Heart right ventricle (tissue), 16 donors: ENCODE measurements at regions of chr3 and their contacts with region 1.

Region 1: GRCh38 chr3:72245183-72245811 is 460.3 kb upstream of the PROK2 start:
- DNase-seq: peak; percentile 58 to 77
- ATAC-seq: peak; percentile 64 to 89 (median 82)
- H3K4me3 ChIP-seq: no peak overlapping the region
- H3K27ac ChIP-seq: peak overlapping the region in 2 of 10 donors; percentile 14 to 30
- H3K4me1 ChIP-seq: peaks cover 5 to 46% (median 30%) of the 10 kb centered on the region in 9 donors
- H3K27me3 ChIP-seq: no peaks in the 10 kb centered on the region
- CTCF ChIP-seq: peak in 3 of 9 donors; percentile 8 to 23 (median 16)

Region 2: DNA sequence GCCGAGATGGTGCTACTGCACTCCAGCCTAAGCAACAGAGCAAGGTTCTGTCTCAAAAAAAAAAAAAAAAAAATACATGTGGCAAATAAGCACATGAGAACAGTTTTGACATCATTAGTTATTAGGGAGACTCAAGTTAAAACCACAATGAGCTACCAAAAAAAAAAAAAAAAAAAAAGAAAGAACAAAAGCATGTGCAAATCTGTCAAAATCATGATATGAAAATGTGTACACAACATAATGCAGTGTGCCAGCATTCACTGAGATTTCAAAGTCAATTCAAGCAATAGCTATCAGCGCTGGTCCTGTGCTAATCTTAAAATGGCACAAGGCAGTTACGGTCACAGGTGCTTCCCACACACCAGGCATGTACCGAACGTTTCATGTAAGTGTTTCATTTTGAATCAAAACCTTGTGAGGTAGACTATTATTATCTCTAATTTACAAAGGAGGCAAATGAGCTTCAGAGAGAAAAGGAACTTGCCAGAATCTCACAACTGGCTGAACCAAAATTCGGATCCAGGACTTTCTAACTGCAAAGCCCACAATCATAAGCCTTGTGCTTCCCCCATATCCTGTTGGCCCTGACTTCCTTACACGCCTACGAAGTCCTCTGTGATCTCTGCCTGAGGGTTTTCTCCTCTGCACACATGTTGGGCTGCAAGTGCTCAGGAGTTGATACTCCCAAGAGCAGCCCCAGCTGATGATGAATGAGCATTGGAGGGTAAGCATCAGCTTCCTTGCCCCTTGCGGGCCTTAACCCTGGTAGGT is 260.3 kb before region 1 on chr3:
- intact Hi-C with region 1: loop called in 1 of 10 experiments (anchors 10 kb)
- DNase-seq: no peak
- ATAC-seq: no peak
- H3K4me3 ChIP-seq: no peak overlapping the region
- H3K27ac ChIP-seq: no peak overlapping the region
- H3K4me1 ChIP-seq: peaks cover 0 to 33% (median 0%) of the 10 kb centered on the region in 9 donors
- H3K27me3 ChIP-seq: no peaks in the 10 kb centered on the region
- CTCF ChIP-seq: no peak

Region 3: DNA sequence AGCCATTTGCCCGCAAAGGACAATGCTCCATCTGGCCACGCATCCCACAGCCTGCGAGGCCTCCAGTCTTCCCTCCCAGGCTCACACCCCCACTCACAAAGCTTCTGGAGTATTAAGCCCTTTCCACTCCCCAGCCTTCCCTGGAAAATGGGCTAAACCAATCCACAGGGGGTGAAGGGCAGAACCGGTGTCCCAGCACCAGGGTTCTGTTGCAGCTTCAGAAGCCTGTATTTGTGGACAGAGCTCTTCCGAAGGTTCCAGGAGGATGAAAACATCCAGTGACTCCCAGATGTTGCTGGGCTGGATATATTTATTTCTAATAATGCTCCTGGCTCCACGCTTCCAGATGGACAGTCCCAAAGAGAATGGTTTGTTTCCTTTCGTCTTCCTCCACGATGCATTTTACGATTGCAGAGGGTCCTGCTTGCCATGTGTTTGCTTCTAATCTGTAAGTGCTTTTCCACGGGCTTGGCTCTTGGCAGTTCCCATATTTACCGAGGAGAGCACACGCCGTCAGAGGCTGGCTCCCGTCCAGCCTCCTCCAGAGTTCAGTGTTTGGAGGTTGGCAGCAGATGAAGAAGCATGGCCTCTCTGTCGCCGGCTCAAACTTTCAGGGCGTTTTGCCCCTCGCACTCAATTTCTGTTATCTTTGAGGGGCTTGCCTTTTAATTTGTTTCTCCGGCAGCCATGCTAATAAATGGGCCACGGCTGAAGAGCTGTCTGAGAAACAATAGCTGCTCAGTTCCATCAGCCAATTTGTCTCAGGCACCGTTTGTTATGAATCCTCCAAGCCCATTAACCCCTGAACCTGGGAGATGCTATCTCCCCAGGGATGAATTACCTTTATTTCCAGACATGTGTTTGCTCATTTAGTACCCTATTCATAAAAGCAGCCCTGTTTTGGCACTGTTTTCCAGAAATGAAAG is 92.5 kb before region 1 on chr3:
- intact Hi-C with region 1: loop called in 1 of 10 experiments (anchors 10 kb)
- DNase-seq: peak; percentile 75 to 76
- ATAC-seq: peak; percentile 76 to 91 (median 88)
- H3K4me3 ChIP-seq: peak overlapping the region in 7 of 10 donors; percentile 16 to 38 (median 34)
- H3K27ac ChIP-seq: peak overlapping the region in 7 of 10 donors; percentile 31 to 72 (median 59)
- H3K4me1 ChIP-seq: peaks cover 0 to 38% (median 19%) of the 10 kb centered on the region in 9 donors
- H3K27me3 ChIP-seq: no peaks in the 10 kb centered on the region
- CTCF ChIP-seq: no peak